ENCODE measurements at regions of chr2 and their contacts with region 1.

Region 1: DNA sequence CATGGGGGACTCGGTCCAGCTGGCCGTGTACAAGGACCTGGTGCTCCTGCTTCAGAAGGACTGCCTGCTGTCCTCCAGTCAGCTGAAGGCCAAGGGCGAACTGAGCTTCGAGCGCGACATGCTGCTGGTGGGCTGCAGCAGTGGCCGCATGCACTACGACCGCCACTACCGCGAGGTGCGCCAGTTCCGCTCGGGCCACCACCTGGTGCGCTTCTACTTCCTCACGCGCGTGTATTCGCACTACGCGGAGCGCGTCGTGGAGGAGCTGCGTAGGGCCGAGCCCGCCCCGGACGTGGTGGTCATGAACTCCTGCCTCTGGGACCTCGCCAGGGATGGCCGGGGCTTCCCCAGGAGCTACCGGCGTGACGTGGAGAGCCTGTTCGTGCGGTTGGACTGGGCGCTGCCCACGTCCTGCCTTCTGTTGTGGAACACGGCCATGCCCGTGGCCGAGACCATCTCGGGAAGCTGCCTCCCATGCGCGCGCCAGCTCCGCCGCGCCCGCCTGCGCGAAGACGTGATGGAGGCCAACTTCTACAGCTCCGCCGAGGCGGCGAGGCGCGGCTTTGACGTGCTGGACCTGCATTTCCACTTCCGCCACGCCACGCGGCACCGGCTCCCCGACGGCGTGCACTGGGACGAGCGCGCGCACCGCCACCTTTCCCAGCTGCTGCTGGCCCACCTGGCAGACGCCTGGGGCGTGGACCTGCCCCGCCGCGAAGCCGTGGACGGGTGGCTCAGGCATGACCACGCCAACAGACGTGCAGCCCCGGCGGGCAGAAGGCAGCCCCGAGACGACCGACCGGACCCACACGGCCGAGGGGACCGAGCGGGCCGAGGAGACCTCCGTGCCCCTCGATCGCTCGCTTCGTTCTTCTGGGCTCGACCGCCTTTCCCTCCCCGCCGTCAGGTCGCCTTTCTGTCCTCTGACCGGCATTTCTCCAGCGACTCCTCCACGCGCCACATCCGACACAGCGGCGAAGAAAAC is 293.9 kb upstream of the ERBB4 start:
- DNase-seq: peak in 3 of 9 experiments; percentile 4 to 5 (median 5)
- ATAC-seq: no peak
- H3K4me3 ChIP-seq: no peak overlapping the region
- H3K4me3 Mint-ChIP-seq: no peak overlapping the region
- H3K27ac ChIP-seq: no peak overlapping the region
- H3K27ac Mint-ChIP-seq: no peak overlapping the region
- H3K4me1 ChIP-seq: no peaks in the 10 kb centered on the region
- H3K4me1 Mint-ChIP-seq: no peaks in the 10 kb centered on the region
- H3K27me3 ChIP-seq: no peaks in the 10 kb centered on the region
- H3K27me3 Mint-ChIP-seq: no peaks in the 10 kb centered on the region
- CTCF ChIP-seq: no peak

Region 2: DNA sequence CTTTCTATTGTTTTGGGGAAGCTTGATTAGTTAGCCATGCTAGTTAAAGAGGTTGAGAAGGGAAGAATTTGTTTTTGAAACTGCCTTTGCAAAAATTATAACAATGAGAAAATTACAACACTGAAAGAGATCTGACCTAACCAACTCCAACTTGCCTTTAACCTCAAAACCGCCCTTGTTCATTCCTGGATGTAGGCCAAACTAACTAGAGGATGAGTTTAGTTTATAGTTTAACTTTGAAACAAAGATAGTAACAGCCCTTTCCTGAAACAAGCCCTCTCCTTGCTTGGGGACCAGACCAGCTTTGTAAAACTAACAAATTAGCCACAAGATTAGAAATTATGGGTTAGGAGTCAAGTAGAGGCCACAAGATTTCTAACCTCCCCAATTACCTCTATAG is 1562.2 kb before region 1 on chr2:
- CTCF ChIA-PET with region 1: no interaction called
- POLR2A ChIA-PET with region 1: no interaction called
- intact Hi-C with region 1: loop called in 1 of 2 experiments (anchors 10 kb)
- DNase-seq: no peak
- ATAC-seq: no peak
- H3K4me3 ChIP-seq: no peak overlapping the region
- H3K4me3 Mint-ChIP-seq: no peak overlapping the region
- H3K27ac ChIP-seq: no peak overlapping the region
- H3K27ac Mint-ChIP-seq: no peak overlapping the region
- H3K4me1 ChIP-seq: no peaks in the 10 kb centered on the region
- H3K4me1 Mint-ChIP-seq: no peaks in the 10 kb centered on the region
- H3K27me3 ChIP-seq: no peaks in the 10 kb centered on the region
- H3K27me3 Mint-ChIP-seq: no peaks in the 10 kb centered on the region
- CTCF ChIP-seq: no peak

Measured in CD8-positive, alpha-beta T cell (primary cell).